Left ventricle myocardium superior (tissue), 1 donor: ENCODE measurements at regions of chr2 and their contacts with region 1.

Region 1: GRCh38 chr2:169824373-169825333 is at the start of gene METTL5:
- DNase-seq: peak; percentile 92
- ATAC-seq: peak; percentile 76
- total RNA-seq, gene METTL5: 67.8 TPM

Region 2: DNA sequence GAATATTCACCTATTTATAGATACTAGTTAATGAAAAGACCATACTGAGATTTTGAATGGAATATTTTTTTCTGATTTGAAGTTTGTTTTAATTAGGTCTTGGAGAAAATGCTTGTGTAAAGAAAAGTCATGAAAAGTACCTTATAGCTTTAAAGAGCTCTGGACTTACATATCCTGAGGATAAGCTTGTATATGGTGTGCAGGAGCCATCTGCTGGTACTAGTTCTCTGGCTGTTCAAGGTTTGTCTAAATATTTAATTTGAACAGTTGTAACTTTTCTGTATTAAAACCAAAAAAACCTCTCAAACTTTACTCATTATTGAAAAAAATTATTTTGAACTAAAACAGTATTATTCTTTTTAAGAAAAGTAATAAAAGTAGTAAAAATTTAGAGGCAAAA is 52.7 kb after region 1 on chr2:
- intact Hi-C with region 1: loop called (anchors 10 kb)
- DNase-seq: no peak
- ATAC-seq: peak; percentile 59

Region 3: GRCh38 chr2:169928463-169928864 is 103.8 kb after region 1 on chr2:
- intact Hi-C with region 1: loop called (anchors 10 kb)
- DNase-seq: no peak
- ATAC-seq: no peak